ENCODE measurements at regions of chr4 and their contacts with region 1.

Region 1: GRCh38 chr4:103923551-103923950 is 203.8 kb upstream of the TACR3 start:
- DNase-seq: no peak

Region 2: DNA sequence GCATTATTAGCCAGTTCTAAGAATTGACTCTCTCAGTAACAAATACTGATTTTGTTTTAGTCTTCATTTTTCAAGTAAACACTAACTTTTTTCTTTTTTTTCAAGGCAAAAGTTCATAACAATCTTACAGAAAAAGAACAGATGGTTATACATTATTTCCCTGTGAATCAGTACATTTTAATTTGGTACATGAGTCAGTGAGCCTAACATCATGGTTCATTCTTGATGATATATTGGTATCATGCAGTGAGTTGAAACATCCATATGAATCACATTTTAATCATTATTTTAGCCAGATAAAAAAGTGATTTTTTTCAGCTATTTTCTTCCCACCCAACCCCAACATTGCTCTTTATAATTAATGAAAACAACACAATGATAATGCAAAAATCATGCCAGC is 19.4 kb before region 1 on chr4:
- intact Hi-C with region 1: loop called in 1 of 2 experiments (anchors 2 kb)
- DNase-seq: no peak

Region 3: DNA sequence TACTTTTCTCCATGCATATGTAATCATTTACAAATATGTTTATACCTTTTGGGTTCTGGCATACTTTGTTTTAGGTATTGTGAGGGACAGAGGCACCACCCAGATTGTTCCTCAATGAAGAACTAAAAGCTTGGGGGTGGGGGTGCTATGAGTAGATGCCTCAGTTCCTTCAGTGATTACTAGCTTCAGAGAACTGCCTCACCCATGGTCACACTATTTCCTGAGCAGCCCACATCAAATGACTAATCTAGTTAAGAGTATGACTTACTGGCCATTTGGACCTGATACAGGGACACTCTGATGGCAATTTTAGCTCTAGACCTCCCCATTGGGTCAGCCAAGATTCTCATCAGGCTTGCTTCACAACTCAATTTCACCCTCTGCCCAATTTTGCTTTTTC is 593.3 kb after region 1 on chr4:
- intact Hi-C with region 1: no loop called
- DNase-seq: no peak

Measured in posterior vena cava (tissue), 2 donors.